Endothelial cell of umbilical vein (primary cell): ENCODE measurements at regions of chr7 and their contacts with region 1.

Region 1: DNA sequence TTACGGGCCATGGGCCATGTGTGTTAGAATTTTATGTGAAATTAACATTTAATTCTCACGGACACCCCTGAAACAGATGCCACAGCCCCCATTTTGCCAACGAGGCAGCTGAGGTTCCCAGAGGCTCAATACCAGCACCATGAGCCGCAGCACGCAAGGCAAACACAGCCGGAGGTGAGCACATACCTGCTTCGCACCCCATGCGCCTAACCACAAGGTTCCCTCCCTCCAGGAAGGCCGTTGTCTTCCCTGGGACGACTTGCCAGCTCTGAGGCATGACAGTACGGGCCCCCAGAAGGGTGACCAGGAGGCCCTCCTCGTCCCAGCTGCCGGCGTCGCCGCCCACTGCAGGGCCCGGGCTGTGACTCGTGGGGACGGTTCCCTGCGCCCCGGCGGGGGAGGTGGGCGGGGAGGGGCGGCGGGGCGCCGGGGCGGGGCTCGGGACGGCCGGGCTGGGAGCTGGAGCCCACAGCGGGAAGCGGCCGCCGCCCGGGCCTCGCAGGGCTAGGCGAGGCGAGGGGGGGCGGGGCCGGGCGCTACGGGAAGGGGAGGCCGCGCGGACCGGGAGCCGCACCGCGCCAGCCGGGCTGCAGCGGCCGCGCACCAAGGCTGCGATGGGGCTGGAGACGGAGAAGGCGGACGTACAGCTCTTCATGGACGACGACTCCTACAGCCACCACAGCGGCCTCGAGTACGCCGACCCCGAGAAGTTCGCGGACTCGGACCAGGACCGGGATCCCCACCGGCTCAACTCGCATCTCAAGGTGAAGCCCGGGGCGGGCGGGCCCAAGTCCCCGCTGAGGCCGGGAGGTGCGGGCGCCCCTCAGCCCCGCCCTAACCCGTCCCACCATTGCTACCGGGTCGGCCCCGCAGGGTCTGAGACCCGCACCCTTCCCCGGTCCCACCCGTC is at the start of gene CAV2:
- DNase-seq: peak; percentile 63
- H3K4me3 ChIP-seq: peak within 1 kb of the TSS; percentile 59 to 86 (median 82)
- H3K27ac ChIP-seq: peak within 1 kb of the TSS; percentile 83
- H3K4me1 ChIP-seq: peaks cover 31% of the 10 kb centered on the region
- H3K27me3 ChIP-seq: no peaks in the 10 kb centered on the region
- CTCF ChIP-seq: no peak
- POLR2A ChIP-seq: peak; percentile 76
- total RNA-seq, gene CAV2: 146 and 179 TPM in 2 replicates

Region 2: DNA sequence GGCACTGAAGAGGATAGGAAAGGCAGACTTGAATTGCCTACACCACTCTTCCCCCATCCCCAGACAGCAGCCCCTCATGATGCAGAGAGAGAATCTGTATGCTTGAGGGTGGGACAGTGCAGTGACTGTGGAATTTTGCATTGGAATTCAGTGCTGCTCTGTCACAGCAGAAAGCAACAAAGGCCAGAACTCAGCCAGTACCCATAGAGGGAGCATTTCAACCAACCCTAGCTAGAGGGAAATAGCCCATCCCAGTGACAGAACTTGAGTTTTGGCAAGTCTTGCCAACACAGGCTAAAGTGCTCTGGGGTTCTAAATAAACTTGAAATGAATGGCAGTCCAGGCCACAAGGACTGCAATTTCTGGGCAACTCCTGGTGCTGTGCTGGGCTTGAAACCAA is 208.7 kb before region 1 on chr7:
- CTCF ChIA-PET with region 1: no interaction called
- POLR2A ChIA-PET with region 1: no interaction called
- dilution Hi-C with region 1: no loop called
- intact Hi-C with region 1: no loop called
- DNase-seq: no peak
- H3K4me3 ChIP-seq: no peak overlapping the region
- H3K27ac ChIP-seq: no peak overlapping the region
- H3K4me1 ChIP-seq: peaks cover 27% of the 10 kb centered on the region
- H3K27me3 ChIP-seq: no peaks in the 10 kb centered on the region
- CTCF ChIP-seq: no peak
- POLR2A ChIP-seq: no peak

Region 3: GRCh38 chr7:116461500-116461899 is 37.9 kb before region 1 on chr7:
- CTCF ChIA-PET with region 1: interaction called, 3 read pairs
- POLR2A ChIA-PET with region 1: interaction called, 4 read pairs
- dilution Hi-C with region 1: no loop called
- intact Hi-C with region 1: loop called (anchors 5 kb)
- DNase-seq: no peak
- H3K4me3 ChIP-seq: no peak overlapping the region
- H3K27ac ChIP-seq: no peak overlapping the region
- H3K4me1 ChIP-seq: peaks cover 15% of the 10 kb centered on the region
- H3K27me3 ChIP-seq: no peaks in the 10 kb centered on the region
- CTCF ChIP-seq: peak in 1 of 2 donors; percentile 11
- POLR2A ChIP-seq: no peak

Region 4: DNA sequence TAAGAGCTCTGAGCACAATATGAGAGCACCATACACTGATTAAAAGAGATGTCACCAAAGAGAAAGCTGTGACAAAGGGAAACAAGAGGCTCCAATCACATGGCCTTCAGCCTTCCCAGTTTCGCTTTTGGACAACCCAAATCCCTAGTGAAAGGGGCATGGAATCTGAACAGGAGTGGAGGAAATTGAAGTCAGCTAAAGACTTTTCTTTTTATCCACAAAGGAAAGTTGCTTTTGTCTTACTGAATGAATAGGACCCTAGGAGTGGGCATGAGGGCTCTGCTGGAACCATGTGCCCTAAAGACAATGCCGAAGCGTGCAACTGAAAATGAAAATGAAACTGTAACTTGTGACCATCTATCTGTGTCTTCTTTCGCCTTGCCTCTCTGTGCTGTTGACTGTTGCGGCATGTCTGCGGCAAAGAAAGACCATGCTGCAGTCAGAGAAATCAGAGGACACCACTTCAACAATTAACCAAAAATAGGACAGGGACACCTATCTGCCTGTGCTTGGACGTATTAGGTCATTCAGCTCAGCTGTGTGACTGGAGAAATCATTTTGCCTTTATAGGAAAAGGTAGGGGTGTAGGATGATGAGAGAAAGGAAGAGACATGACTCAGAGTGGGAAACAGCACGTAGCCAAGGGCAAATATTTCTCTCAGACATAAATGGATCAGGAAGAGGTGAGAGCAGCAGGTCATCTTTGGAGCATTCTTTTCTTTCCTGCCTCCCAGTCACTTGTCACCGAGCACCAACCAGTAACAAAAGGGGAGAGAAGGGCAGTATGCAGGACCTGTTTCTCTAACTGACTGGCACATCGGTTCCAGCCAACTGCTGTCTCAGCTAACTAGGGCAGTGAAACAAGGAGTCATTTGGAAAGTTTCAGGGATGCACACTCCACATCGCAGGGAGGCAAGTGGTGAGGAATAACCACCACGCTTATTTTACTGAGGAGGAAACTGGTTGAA is 12.4 kb after region 1 on chr7:
- CTCF ChIA-PET with region 1: interaction called, 10 read pairs
- POLR2A ChIA-PET with region 1: interaction called, 8 read pairs
- dilution Hi-C with region 1: no loop called
- intact Hi-C with region 1: loop called (anchors 1 kb)
- DNase-seq: peak; percentile 96
- H3K4me3 ChIP-seq: peak overlapping the region; percentile 32 to 70 (median 45)
- H3K27ac ChIP-seq: peak overlapping the region; percentile 96
- H3K4me1 ChIP-seq: peaks cover 54% of the 10 kb centered on the region
- H3K27me3 ChIP-seq: no peaks in the 10 kb centered on the region
- CTCF ChIP-seq: no peak
- POLR2A ChIP-seq: peak; percentile 76

Region 5: GRCh38 chr7:116824449-116824848 is 325.0 kb after region 1 on chr7:
- CTCF ChIA-PET with region 1: no interaction called
- POLR2A ChIA-PET with region 1: no interaction called
- dilution Hi-C with region 1: no loop called
- intact Hi-C with region 1: no loop called
- DNase-seq: no peak
- H3K4me3 ChIP-seq: no peak overlapping the region
- H3K27ac ChIP-seq: no peak overlapping the region
- H3K4me1 ChIP-seq: no peaks in the 10 kb centered on the region
- H3K27me3 ChIP-seq: no peaks in the 10 kb centered on the region
- CTCF ChIP-seq: no peak
- POLR2A ChIP-seq: no peak